HEK293 (cell line): ENCODE measurements at regions of chr17 and their contacts with region 1.

Region 1: DNA sequence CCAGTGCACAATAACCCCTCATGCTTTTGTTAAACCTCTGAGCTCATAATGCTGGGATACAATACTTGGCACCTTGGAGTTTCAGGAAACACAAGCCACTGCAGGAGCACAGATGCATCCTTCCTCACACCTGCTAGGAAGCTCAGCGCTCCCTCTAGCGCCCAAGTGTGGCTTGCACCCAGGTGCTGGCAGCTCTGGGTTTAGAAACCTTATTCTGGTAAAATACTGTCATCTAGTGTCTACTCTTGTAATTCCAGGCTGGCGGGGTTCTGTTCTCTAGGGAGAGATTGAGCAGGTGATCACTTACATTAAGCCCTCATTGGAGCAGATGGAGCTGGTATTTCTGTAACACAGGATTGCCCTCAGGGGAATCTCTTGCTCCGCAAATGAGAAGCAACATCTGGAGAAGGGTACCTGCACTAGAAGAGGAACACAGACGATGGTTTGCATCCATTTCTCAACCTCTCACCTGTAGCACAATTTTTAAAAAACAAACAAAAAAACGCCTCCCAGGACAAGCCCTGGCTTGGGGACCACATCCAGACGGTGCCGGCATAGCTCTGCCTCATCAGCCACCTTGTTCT is 1.5 kb downstream of the CCL1 start:
- H3K4me3 ChIP-seq: no peak overlapping the region
- H3K27ac ChIP-seq: no peak overlapping the region
- H3K4me1 ChIP-seq: no peaks in the 10 kb centered on the region
- CTCF ChIP-seq: peak; percentile 97

Region 2: GRCh38 chr17:33927732-33928133 is 433.8 kb before region 1 on chr17:
- CTCF ChIA-PET with region 1: interaction called, 20 read pairs
- POLR2A ChIA-PET with region 1: no interaction called
- H3K4me3 ChIP-seq: no peak overlapping the region
- H3K27ac ChIP-seq: no peak overlapping the region
- H3K4me1 ChIP-seq: 0 out of 2 replicates have a peak, but pooled peaks cover 2% of the 10 kb centered on the region
- CTCF ChIP-seq: no peak

Region 3: DNA sequence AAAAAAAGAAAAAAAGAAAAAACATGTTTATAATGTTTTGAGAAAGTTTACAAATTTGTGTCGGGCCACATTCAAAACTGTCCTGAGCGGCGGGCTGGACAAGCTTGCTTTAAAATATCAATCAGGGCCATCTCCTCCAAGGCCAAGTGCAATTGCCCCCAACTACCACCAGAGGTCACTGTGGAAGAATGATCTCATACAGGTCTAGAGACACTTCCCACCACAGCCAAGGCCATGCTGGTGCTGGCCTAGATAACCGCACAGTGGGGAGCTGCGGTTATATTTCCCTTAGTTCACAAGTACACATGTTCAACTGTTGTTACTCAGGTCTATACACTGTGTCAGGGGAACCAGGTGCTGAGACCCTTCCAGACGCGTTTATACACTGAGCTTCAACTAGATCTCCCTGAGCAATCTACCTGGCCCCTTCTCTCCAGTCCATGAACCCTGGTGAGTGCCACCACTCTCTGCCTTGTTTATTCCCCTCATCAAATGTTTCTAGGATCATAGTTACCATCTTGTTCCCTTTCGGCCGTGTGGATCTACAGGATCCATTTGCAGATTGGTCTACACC is 190.2 kb before region 1 on chr17:
- CTCF ChIA-PET with region 1: interaction called, 176 read pairs
- POLR2A ChIA-PET with region 1: no interaction called
- H3K4me3 ChIP-seq: no peak overlapping the region
- H3K27ac ChIP-seq: no peak overlapping the region
- H3K4me1 ChIP-seq: peaks cover 5% of the 10 kb centered on the region; the same call in 1 of the 2 replicates
- CTCF ChIP-seq: peak; percentile 41; the same call in 1 of the 2 replicates

Region 4: DNA sequence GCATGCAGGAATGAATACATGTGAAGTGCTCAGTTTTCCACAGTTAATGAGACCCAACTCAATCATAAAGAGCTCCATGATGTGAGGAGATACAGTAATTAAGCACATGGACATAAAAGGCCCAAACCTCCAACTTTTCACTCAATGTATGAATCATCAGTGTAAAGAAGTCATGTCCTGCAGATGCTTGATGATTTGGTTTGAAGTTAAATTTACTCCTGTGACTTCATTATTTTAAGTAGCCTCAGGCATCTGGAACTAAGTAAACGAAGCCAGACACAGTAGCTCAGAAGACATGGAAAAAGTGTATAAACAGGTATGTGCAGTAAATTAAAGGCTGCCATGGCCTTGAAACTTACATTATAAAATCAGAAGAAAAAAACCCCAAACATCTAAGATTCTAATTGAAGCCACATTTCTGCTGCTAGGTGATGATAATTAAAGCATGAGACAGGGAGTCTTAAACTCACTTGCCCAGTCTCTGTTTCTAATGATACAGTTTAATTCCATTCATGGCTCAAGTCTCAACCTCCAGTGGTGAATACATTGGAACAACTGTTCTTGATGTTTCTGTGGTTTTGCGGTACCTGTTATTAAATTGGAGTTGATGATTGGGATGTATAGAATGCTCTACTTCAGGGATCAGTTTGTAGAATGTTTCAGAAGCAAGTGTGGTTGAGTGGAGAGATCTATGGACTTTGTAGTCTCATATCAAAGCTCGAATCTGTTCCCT is 135.4 kb before region 1 on chr17:
- CTCF ChIA-PET with region 1: interaction called, 18 read pairs
- POLR2A ChIA-PET with region 1: no interaction called
- H3K4me3 ChIP-seq: no peak overlapping the region
- H3K27ac ChIP-seq: no peak overlapping the region
- H3K4me1 ChIP-seq: no peaks in the 10 kb centered on the region
- CTCF ChIP-seq: no peak

Region 5: GRCh38 chr17:34285286-34285792 is 76.2 kb before region 1 on chr17 and contains the start of gene CCL11:
- CTCF ChIA-PET with region 1: interaction called, 11 read pairs
- POLR2A ChIA-PET with region 1: no interaction called
- H3K4me3 ChIP-seq: no peak within 1 kb of the TSS
- H3K27ac ChIP-seq: no peak within 1 kb of the TSS
- H3K4me1 ChIP-seq: no peaks in the 10 kb centered on the region; the same call in 1 of the 2 replicates
- CTCF ChIP-seq: no peak

Region 6: GRCh38 chr17:34347063-34347462 is 14.5 kb before region 1 on chr17:
- CTCF ChIA-PET with region 1: interaction called, 40 read pairs
- POLR2A ChIA-PET with region 1: no interaction called
- H3K4me3 ChIP-seq: no peak overlapping the region
- H3K27ac ChIP-seq: no peak overlapping the region
- H3K4me1 ChIP-seq: no peaks in the 10 kb centered on the region
- CTCF ChIP-seq: no peak

Region 7: GRCh38 chr17:34398990-34399389 is 37.4 kb after region 1 on chr17:
- CTCF ChIA-PET with region 1: interaction called, 35 read pairs
- POLR2A ChIA-PET with region 1: interaction called, 3 read pairs
- H3K4me3 ChIP-seq: no peak overlapping the region
- H3K27ac ChIP-seq: no peak overlapping the region
- H3K4me1 ChIP-seq: no peaks in the 10 kb centered on the region
- CTCF ChIP-seq: no peak

Region 8: DNA sequence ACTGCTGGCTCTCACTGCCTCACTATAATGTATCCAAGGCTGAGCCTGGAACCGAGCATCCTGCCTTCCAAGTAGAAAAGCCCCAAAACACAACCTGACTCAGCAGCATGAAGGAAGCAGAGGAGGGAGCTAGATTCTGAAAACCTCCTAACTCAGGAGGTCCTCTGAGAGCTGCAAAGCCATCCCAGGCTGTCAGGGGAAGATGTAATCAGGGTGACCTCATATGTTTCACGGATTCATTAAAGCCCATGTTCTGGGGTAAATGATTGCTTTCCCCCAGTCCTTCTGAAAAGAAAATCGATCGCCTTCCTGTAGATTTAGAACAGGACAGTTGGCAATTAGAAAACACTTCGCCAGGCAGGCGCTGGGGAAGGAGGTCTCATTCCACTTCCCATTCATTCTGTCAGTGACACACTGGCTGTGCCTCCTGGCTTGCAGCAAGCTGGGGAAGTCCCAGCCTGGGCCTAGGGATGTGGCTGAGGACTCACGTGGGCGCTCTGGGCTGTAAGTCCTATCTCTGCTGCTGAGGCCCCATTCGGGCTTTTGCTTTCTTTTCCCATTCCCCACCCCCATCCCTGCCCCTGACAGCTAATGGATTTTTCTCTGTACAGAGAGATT is 142.1 kb after region 1 on chr17:
- CTCF ChIA-PET with region 1: no interaction called
- POLR2A ChIA-PET with region 1: no interaction called
- H3K4me3 ChIP-seq: no peak overlapping the region
- H3K27ac ChIP-seq: no peak overlapping the region
- H3K4me1 ChIP-seq: no peaks in the 10 kb centered on the region
- CTCF ChIP-seq: no peak

Region 9: DNA sequence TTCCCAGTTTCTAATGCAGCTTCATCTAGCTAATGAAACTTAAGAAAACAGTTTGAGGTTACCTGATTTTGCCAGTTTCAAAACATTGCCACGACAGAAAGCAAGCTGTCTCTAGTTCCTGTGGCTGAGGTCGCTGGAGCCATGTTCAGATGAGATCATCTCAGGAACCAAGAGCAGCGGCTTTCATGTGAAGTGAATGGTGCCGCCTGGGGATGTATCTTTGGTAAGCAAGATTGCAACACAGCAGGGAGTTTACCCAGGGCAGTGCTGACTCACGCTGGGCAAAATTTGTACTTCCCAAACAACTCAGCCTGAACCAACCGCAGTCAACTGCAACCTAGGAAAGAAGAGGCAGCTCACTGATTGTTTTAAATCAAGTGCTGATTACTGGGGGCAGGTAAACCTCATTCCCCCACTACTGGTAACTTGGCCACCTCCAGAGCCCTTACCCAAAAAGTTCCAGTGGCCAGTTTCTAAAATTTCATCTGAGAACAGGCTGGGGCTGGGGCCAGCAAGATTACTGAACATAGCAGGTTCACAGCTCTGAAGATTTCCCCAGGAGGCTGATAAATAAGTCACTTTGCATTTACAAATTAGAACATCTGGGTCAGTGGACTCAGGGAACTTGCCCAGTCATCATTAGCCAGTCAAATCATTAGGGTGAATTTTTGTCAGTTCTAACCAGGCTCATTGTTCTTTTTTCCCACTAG is 702.1 kb after region 1 on chr17 and contains the start of gene RFFL:
- CTCF ChIA-PET with region 1: no interaction called
- POLR2A ChIA-PET with region 1: no interaction called
- H3K4me3 ChIP-seq: peak within 1 kb of the TSS; percentile 22
- H3K27ac ChIP-seq: peak within 1 kb of the TSS; percentile 77
- H3K4me1 ChIP-seq: peaks cover 17% of the 10 kb centered on the region
- CTCF ChIP-seq: peak; percentile 69; the same call in 1 of the 2 replicates